ENCODE measurements at regions of chr5 and their contacts with region 1.

Region 1: DNA sequence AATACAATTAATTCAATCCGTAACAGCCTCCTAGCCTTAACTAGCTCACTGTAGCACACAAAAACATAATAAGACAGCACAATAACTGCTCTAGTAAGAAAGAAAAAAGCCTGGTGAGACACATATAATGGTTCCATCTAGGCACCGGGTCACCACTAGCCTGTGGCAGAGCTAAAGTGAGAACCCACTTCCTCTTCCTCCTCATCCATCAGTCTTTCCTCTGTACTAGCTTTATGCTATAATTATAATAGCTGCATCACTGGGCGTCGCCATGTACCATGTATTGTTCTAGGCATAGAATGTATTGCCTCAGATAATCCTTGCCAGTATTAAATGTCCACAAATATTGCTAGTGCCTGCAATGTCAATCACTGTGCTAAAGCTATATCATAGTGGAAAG is 23.1 kb downstream of the ADRB2 start:
- DNase-seq: peak in 4 of 5 donors; percentile 39 to 78 (median 57)
- H3K4me3 ChIP-seq: peak overlapping the region; percentile 3
- H3K4me3 Mint-ChIP-seq: peak overlapping the region; percentile 66 to 91 (median 84)
- H3K27ac ChIP-seq: peak overlapping the region; percentile 58
- H3K27ac Mint-ChIP-seq: peak overlapping the region; percentile 90 to 99 (median 98)
- H3K4me1 ChIP-seq: peaks cover 94% of the 10 kb centered on the region
- H3K4me1 Mint-ChIP-seq: peaks cover 87 to 97% (median 97%) of the 10 kb centered on the region in 3 donors
- H3K27me3 ChIP-seq: no peaks in the 10 kb centered on the region
- H3K27me3 Mint-ChIP-seq: no peaks in the 10 kb centered on the region

Region 2: GRCh38 chr5:148740966-148741742 is 108.3 kb before region 1 on chr5:
- CTCF ChIA-PET with region 1: interaction called, 12 read pairs
- POLR2A ChIA-PET with region 1: no interaction called
- DNase-seq: peak in 2 of 5 donors; percentile 16 to 27
- H3K4me3 ChIP-seq: no peak overlapping the region
- H3K4me3 Mint-ChIP-seq: no peak overlapping the region
- H3K27ac ChIP-seq: no peak overlapping the region
- H3K27ac Mint-ChIP-seq: no peak overlapping the region
- H3K4me1 ChIP-seq: no peaks in the 10 kb centered on the region
- H3K4me1 Mint-ChIP-seq: no peaks in the 10 kb centered on the region
- H3K27me3 ChIP-seq: no peaks in the 10 kb centered on the region
- H3K27me3 Mint-ChIP-seq: peaks cover 11 to 30% of the 10 kb centered on the region in 2 donors

Region 3: GRCh38 chr5:148826053-148826738 is 23.3 kb before region 1 on chr5 and contains the start of gene ADRB2:
- CTCF ChIA-PET with region 1: interaction called, 20 read pairs
- POLR2A ChIA-PET with region 1: interaction called, 12 read pairs
- DNase-seq: peak; percentile 82 to 94 (median 90)
- H3K4me3 ChIP-seq: peak within 1 kb of the TSS; percentile 78
- H3K4me3 Mint-ChIP-seq: peak within 1 kb of the TSS; percentile 90 to 99 (median 95)
- H3K27ac ChIP-seq: peak within 1 kb of the TSS; percentile 77
- H3K27ac Mint-ChIP-seq: peak within 1 kb of the TSS; percentile 83 to 99 (median 96)
- H3K4me1 ChIP-seq: peaks cover 11% of the 10 kb centered on the region
- H3K4me1 Mint-ChIP-seq: peaks cover 48 to 59% (median 59%) of the 10 kb centered on the region in 3 donors
- H3K27me3 ChIP-seq: no peaks in the 10 kb centered on the region
- H3K27me3 Mint-ChIP-seq: peaks cover 0 to 2% of the 10 kb centered on the region in 2 donors
- total RNA-seq, gene ADRB2: 1.6 to 2.1 TPM

Measured in CD8-positive, alpha-beta memory T cell (primary cell).